Posterior cingulate gyrus (tissue), 11 donors: ENCODE measurements at regions of chr16 and their contacts with region 1.

Region 1: DNA sequence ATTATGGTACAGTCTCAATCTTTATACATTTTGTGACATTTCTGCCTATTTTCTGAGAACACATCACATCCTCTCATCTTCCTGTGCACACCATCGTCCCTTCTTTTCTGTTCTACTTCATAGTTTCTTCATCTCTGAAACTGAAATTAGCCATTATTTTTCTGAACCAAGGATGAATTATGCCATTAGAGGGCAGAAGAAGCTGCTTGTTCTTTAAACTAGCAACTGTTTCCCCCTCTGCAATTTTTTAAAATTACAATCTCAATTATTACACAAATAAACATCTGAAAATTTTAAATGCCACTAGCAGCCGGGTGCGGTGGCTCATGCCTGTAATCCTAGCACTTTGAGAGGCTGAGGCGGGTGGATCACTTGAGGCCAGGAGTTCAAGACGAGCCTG is 41.3 kb downstream of the RBBP6 start:
- DNase-seq: no peak

Region 2: GRCh38 chr16:24800586-24800985 is 219.9 kb after region 1 on chr16:
- intact Hi-C with region 1: loop called (anchors 10 kb)
- DNase-seq: no peak